ENCODE measurements at regions of chr18 and their contacts with region 1.

Region 1: DNA sequence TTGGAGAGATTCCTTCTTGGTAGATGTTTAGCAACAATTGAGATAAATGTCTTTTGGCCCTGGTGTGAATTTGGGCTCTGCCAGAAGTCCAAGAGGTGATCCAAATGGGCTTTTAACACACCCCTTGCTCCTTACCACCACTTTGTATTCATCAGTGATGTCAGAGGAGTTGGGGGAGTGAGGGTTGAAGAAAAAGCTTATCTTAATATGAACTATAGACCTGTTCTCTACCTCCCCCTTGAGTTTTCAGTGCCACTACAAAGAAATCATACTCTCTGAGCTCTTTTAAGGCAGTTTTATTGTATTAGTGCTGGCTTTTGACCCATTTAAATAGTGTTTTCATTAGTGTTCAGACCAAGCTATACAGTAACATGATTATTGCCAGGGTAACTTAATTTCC is 229.1 kb downstream of the PHLPP1 start:
- DNase-seq: no peak
- ATAC-seq: no peak
- H3K4me3 ChIP-seq: no peak overlapping the region
- H3K27ac ChIP-seq: no peak overlapping the region
- H3K4me1 ChIP-seq: no peaks in the 10 kb centered on the region
- H3K27me3 ChIP-seq: no peaks in the 10 kb centered on the region

Region 2: DNA sequence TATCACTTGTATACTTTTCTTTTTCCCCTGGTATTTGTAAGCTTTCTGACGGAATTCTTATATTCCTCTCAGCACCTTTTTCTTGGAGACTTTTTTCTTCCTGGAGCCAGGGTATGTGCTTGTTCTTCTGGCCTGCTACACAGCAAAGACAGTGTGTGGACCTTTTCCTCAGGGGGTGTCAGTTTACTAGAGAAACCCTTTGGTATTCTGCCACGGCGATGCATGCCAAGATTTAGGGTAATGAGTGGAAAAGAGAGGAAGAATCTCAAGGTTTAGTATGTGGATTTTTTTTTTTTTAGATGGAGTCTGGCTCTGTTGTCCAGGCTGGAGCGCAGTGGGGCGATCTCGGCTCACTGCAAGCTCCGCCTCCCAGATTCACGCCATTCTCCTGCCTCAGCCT is 76.9 kb before region 1 on chr18:
- intact Hi-C with region 1: loop called in 1 of 2 experiments (anchors 5 kb)
- DNase-seq: no peak
- ATAC-seq: no peak
- H3K4me3 ChIP-seq: no peak overlapping the region
- H3K27ac ChIP-seq: no peak overlapping the region
- H3K4me1 ChIP-seq: no peaks in the 10 kb centered on the region
- H3K27me3 ChIP-seq: no peaks in the 10 kb centered on the region

Region 3: GRCh38 chr18:62904396-62905285 is 39.8 kb before region 1 on chr18:
- intact Hi-C with region 1: no loop called
- DNase-seq: no peak
- ATAC-seq: no peak
- H3K4me3 ChIP-seq: no peak overlapping the region
- H3K27ac ChIP-seq: no peak overlapping the region
- H3K4me1 ChIP-seq: no peaks in the 10 kb centered on the region
- H3K27me3 ChIP-seq: no peaks in the 10 kb centered on the region